Activated naive CD8-positive, alpha-beta T cell treated with anti-CD3 and anti-CD28 coated beads, Interleukin-2, amount 10 ng/mL, durations not matched to agents 7 days and 5 days (primary cell): ENCODE measurements at regions of chr3 and their contacts with region 1.

Region 1: GRCh38 chr3:10142707-10143566 is 1.4 kb downstream of the VHL start:
- DNase-seq: no peak
- ATAC-seq: no peak
- H3K4me3 Mint-ChIP-seq: peak overlapping the region; percentile 92
- H3K27ac Mint-ChIP-seq: peak overlapping the region; percentile 96
- H3K4me1 Mint-ChIP-seq: peaks cover 26% of the 10 kb centered on the region
- H3K27me3 Mint-ChIP-seq: no peaks in the 10 kb centered on the region

Region 2: GRCh38 chr3:10192953-10193691 is 50.2 kb after region 1 on chr3:
- POLR2A ChIA-PET with region 1: interaction called, 11 read pairs
- DNase-seq: peak; percentile 47
- ATAC-seq: peak; percentile 27
- H3K4me3 Mint-ChIP-seq: peak overlapping the region; percentile 78
- H3K27ac Mint-ChIP-seq: peak overlapping the region; percentile 97
- H3K4me1 Mint-ChIP-seq: peaks cover 67% of the 10 kb centered on the region
- H3K27me3 Mint-ChIP-seq: no peaks in the 10 kb centered on the region

Region 3: GRCh38 chr3:10248184-10249080 is 105.5 kb after region 1 on chr3 and contains the start of gene TATDN2:
- POLR2A ChIA-PET with region 1: interaction called, 12 read pairs
- DNase-seq: peak; percentile 92
- ATAC-seq: peak; percentile 94
- H3K4me3 Mint-ChIP-seq: peak within 1 kb of the TSS; percentile 95
- H3K27ac Mint-ChIP-seq: peak within 1 kb of the TSS; percentile 96
- H3K4me1 Mint-ChIP-seq: peaks cover 35% of the 10 kb centered on the region
- H3K27me3 Mint-ChIP-seq: no peaks in the 10 kb centered on the region
- total RNA-seq, gene TATDN2: 55.4 to 67.4 TPM